Left cardiac atrium (tissue), 4 donors: ENCODE measurements at regions of chr14 and their contacts with region 1.

Region 1: DNA sequence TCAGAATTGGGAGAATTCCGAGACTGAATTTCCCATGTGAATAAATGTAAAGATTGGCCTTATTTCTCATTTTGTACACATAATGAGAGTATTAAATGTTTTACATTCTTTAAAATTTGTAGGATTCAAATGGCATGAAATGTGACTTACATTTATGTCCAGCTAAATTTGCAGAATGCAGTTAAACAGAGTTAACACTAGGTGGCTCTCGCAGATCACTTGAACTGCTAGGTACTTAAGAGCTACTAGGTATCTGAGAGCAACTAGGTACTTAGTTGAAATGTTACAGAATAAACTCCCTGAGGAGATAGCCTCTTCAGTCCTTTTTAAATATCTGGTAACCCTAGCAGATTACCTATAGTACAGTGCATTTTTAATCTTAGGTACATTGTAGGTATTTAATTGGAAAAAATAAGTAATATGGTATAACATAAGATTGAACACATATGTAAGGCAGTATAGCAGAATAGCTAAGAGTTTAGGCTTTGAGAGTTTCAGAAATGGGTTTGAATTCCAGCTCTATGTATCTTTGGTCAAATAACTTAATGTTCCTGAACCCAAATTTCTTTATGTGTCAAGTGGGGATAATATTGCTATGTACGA is 73.8 kb downstream of the KIAA0586 start:
- DNase-seq: no peak
- ATAC-seq: peak; percentile 54 to 59

Region 2: GRCh38 chr14:58199726-58200479 is 301.4 kb before region 1 on chr14 and contains the start of gene ACTR10:
- intact Hi-C with region 1: no loop called
- DNase-seq: peak; percentile 89
- ATAC-seq: peak; percentile 97
- total RNA-seq, gene ACTR10: 66.9 to 76.8 TPM

Region 3: DNA sequence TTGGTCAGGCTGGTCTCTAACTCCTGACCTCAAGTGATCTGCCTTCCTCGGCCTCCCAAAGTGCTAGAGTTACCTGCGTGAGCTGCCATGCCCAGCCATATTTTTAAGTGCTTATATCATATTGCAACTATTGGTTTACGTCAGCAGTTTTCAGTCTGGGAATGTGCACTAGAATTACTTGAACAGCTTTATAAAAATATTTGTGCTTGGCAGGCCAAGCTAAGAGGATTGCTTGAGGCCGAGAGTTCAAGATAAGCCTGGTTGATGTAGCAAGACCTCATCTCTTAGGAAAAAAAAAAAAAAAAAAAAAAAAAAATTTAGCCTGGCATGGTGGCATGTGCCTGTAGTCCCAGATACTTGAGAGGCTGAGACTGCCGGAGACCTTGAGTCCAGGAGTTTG is 56.7 kb before region 1 on chr14:
- intact Hi-C with region 1: no loop called
- DNase-seq: no peak
- ATAC-seq: no peak

Region 4: GRCh38 chr14:59055439-59056045 is 554.2 kb after region 1 on chr14:
- intact Hi-C with region 1: loop called (anchors 2 to 10 kb)
- DNase-seq: no peak
- ATAC-seq: peak; percentile 73 to 81